ENCODE measurements at regions of chr1 and their contacts with region 1.

Region 1: GRCh38 chr1:109397538-109398342 is at the start of gene SORT1:
- DNase-seq: no peak
- H3K4me3 ChIP-seq: peak within 1 kb of the TSS; percentile 46 to 91
- H3K27ac ChIP-seq: peak within 1 kb of the TSS; percentile 45
- H3K4me1 ChIP-seq: peaks cover 9% of the 10 kb centered on the region
- H3K27me3 ChIP-seq: no peaks in the 10 kb centered on the region
- CTCF ChIP-seq: no peak
- POLR2A ChIP-seq: peak in 1 of 2 donors; percentile 22
- total RNA-seq, gene SORT1: 30.7 TPM

Region 2: DNA sequence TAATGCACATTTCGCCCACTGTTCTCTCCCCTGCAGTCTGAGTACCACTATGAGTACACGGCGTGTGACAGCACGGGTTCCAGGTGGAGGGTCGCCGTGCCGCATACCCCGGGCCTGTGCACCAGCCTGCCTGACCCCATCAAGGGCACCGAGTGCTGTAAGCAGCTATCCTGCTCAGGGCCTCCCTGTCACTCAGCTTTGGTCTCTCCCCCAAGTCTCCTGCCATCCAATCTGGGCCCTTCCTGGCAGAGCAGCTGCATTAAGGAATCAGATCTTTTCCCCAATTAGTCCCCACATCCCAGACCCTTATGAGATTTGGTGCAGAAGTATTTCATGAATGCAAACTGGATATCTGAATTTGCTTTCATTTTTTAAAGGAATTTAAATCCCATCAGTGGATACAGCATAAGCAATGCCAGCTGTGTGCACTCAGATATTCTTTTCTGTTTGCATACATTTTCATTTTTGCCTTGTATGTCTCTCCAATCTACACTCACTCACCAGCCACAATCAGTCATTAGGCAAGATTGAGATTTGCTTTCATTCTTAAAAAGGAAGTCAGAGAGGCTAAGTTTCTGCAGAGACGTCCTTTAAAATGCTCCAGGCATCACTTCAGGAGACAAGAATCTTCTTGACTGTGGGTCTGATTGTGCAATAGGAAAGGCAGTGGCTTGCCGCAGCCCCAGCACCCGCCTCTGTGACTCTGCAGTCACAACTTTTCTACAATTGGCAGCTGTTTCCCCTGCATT is 235.7 kb before region 1 on chr1:
- intact Hi-C with region 1: no loop called
- DNase-seq: no peak
- H3K4me3 ChIP-seq: peak overlapping the region; percentile 9 to 21
- H3K27ac ChIP-seq: peak overlapping the region; percentile 63
- H3K4me1 ChIP-seq: peaks cover 16% of the 10 kb centered on the region
- H3K27me3 ChIP-seq: no peaks in the 10 kb centered on the region
- CTCF ChIP-seq: no peak
- POLR2A ChIP-seq: no peak

Region 3: DNA sequence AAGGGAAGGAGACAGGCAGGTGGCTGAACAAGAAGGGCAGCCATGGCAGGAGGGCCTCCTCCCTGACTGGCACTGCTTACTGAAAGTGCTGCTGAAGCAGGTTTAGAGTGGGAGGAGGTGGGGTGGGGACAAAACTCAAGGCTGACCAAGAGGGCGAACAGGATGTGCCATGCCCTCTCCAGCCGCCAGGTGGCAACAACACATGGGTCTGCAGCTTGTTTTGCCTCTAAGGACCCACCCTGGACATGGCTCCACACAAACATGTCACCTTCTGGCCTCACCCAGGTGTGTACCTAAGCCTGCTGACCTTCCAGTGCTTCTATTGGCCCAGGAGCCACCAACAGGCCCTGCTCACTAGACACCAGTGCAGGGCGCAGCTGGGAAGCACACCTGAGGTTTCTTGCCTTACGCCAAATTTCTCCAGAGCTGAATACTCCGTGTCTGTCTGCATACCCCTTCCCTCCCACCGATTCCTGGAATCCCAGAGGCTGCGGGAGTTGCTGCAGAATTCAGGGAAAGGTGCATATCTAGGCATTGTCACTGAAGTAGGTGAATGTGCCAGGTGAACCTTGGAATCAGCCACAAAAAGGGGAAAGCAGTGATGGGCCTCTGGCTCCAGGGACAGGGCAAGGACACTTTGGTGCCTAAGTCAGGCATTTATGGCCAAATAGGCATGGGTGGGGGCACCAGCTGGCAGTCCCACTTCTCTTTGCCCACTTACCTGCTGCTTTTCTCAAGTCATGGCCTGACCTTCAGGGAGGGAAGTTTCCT is 120.1 kb before region 1 on chr1:
- intact Hi-C with region 1: loop called (anchors 5 kb)
- DNase-seq: no peak
- H3K4me3 ChIP-seq: no peak overlapping the region
- H3K27ac ChIP-seq: no peak overlapping the region
- H3K4me1 ChIP-seq: peaks cover 23% of the 10 kb centered on the region
- H3K27me3 ChIP-seq: no peaks in the 10 kb centered on the region
- CTCF ChIP-seq: peak; percentile 65 to 71 (median 71)
- POLR2A ChIP-seq: no peak